ENCODE measurements at regions of chr9 and their contacts with region 1.

Region 1: DNA sequence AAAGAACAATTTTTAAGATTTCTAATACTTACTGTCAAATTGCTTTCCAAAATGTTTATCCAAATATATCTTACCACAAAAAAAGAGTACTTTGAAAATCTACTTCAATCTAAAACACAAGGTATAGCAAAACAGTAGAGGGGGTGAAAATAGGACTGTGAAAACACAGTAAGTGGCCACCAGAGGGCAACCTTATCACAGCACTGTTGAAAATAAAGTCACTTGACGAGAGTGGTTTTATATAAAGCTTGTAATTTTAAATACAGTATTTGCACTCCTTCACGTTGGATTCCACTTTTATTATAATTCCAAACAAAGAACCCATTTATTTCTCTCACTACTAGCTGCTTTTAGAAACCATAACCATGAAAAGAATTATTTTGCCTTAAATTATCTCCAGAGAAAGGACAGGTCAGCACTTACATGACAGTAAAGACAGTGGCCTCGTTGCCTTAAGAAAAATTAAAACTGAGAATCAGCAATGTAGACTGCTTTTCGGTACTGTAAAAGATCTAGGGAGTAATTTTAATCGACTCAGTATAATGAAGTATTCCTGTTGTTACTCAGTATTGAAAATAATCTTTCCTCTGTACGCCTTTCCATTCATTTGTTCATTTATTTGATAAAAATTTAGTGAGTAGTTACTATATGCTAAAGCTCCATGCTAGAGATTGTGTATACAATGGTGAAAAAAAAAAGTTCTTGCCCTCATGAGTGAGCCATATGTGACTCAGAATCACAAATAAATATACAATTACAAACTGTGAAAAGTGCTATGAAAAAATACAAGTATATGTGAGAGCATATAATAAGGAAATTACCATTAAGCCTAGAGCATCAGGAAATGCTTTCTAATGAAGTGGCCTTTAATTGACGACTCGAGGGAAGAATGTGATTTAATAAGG is 40.0 kb upstream of the CDK5RAP2 start:
- DNase-seq: peak; percentile 67
- H3K4me3 Mint-ChIP-seq: no peak overlapping the region
- H3K27ac Mint-ChIP-seq: no peak overlapping the region
- H3K4me1 Mint-ChIP-seq: peaks cover under 1% of the 10 kb centered on the region
- H3K27me3 Mint-ChIP-seq: no peaks in the 10 kb centered on the region

Region 2: GRCh38 chr9:120714088-120714845 is 94.3 kb after region 1 on chr9 and contains the start of gene MEGF9:
- CTCF ChIA-PET with region 1: interaction called, 5 read pairs
- POLR2A ChIA-PET with region 1: no interaction called
- intact Hi-C with region 1: loop called (anchors 1 kb)
- DNase-seq: peak; percentile 98
- H3K4me3 Mint-ChIP-seq: peak within 1 kb of the TSS; percentile 84
- H3K27ac Mint-ChIP-seq: peak within 1 kb of the TSS; percentile 65
- H3K4me1 Mint-ChIP-seq: peaks cover 31% of the 10 kb centered on the region
- H3K27me3 Mint-ChIP-seq: no peaks in the 10 kb centered on the region
- total RNA-seq, gene MEGF9: 4.4 to 4.6 TPM

Region 3: GRCh38 chr9:120735415-120736126 is 115.6 kb after region 1 on chr9:
- CTCF ChIA-PET with region 1: interaction called, 7 read pairs
- POLR2A ChIA-PET with region 1: no interaction called
- intact Hi-C with region 1: loop called (anchors 5 kb)
- DNase-seq: no peak
- H3K4me3 Mint-ChIP-seq: no peak overlapping the region
- H3K27ac Mint-ChIP-seq: no peak overlapping the region
- H3K4me1 Mint-ChIP-seq: no peaks in the 10 kb centered on the region
- H3K27me3 Mint-ChIP-seq: no peaks in the 10 kb centered on the region

Measured in activated CD4-positive, alpha-beta memory T cell treated with anti-CD3 and anti-CD28 coated beads for 36 hours (primary cell).